ENCODE measurements at regions of chr4 and their contacts with region 1.

Region 1: GRCh38 chr4:105520817-105521790 is 31.3 kb upstream of the ARHGEF38 start:
- DNase-seq: peak; percentile 27
- ATAC-seq: peak; percentile 66; the same call in 1 of the 2 replicates
- H3K4me3 ChIP-seq: no peak overlapping the region
- H3K27ac ChIP-seq: no peak overlapping the region
- H3K4me1 ChIP-seq: no peaks in the 10 kb centered on the region
- H3K27me3 ChIP-seq: no peaks in the 10 kb centered on the region
- CTCF ChIP-seq: peak; percentile 63; the same call in 1 of the 2 replicates

Region 2: GRCh38 chr4:105715692-105716278 is 194.7 kb after region 1 on chr4:
- CTCF ChIA-PET with region 1: no interaction called
- POLR2A ChIA-PET with region 1: no interaction called
- in situ Hi-C with region 1: no loop called
- intact Hi-C with region 1: loop called (anchors 5 kb)
- DNase-seq: no peak
- ATAC-seq: no peak
- H3K4me3 ChIP-seq: no peak overlapping the region
- H3K27ac ChIP-seq: no peak overlapping the region
- H3K4me1 ChIP-seq: no peaks in the 10 kb centered on the region; the same call in 1 of the 2 replicates
- H3K27me3 ChIP-seq: no peaks in the 10 kb centered on the region
- CTCF ChIP-seq: peak; percentile 22; the same call in 1 of the 2 replicates

Region 3: GRCh38 chr4:106186201-106186600 is 665.1 kb after region 1 on chr4:
- CTCF ChIA-PET with region 1: no interaction called
- POLR2A ChIA-PET with region 1: no interaction called
- in situ Hi-C with region 1: no loop called
- intact Hi-C with region 1: no loop called
- DNase-seq: no peak
- ATAC-seq: no peak
- H3K4me3 ChIP-seq: no peak overlapping the region
- H3K27ac ChIP-seq: no peak overlapping the region
- H3K4me1 ChIP-seq: no peaks in the 10 kb centered on the region
- H3K27me3 ChIP-seq: no peaks in the 10 kb centered on the region
- CTCF ChIP-seq: no peak